AG04450 (cell line): ENCODE measurements at regions of chr9 and their contacts with region 1.

Region 1: DNA sequence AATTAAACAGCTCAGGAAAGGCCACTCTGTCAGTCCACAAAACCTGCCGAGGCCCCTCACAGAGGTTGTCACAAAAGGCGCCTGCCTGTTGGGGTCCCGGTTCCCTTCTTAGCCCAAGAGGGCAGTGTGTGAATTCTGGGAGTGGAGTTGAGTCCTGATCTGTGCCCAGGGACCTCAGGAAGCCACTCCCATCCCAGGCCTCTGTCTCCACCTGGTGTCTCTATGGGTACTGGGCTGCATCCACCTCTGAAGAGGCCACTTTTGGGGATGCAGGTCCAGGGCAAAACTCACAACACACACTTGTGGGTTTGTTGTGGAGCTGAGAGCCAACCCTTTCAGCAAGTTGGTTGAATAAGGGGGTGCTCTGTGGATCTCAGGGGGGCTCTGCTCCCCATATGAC is 74.3 kb upstream of the STXBP1 start:
- DNase-seq: no peak
- H3K4me3 ChIP-seq: no peak overlapping the region
- H3K27ac ChIP-seq: peak overlapping the region; percentile 70
- H3K27me3 ChIP-seq: no peaks in the 10 kb centered on the region
- CTCF ChIP-seq: peak; percentile 43

Region 2: GRCh38 chr9:127525401-127526187 is 12.2 kb before region 1 on chr9:
- CTCF ChIA-PET with region 1: interaction called, 16 read pairs
- POLR2A ChIA-PET with region 1: interaction called, 7 read pairs
- DNase-seq: no peak
- H3K4me3 ChIP-seq: no peak overlapping the region
- H3K27ac ChIP-seq: peak overlapping the region; percentile 21
- H3K27me3 ChIP-seq: no peaks in the 10 kb centered on the region
- CTCF ChIP-seq: peak; percentile 67

Region 3: GRCh38 chr9:127554966-127555767 is 17.4 kb after region 1 on chr9:
- CTCF ChIA-PET with region 1: interaction called, 4 read pairs
- POLR2A ChIA-PET with region 1: interaction called, 10 read pairs
- DNase-seq: no peak
- H3K4me3 ChIP-seq: no peak overlapping the region
- H3K27ac ChIP-seq: peak overlapping the region; percentile 89
- H3K27me3 ChIP-seq: no peaks in the 10 kb centered on the region
- CTCF ChIP-seq: no peak

Region 4: DNA sequence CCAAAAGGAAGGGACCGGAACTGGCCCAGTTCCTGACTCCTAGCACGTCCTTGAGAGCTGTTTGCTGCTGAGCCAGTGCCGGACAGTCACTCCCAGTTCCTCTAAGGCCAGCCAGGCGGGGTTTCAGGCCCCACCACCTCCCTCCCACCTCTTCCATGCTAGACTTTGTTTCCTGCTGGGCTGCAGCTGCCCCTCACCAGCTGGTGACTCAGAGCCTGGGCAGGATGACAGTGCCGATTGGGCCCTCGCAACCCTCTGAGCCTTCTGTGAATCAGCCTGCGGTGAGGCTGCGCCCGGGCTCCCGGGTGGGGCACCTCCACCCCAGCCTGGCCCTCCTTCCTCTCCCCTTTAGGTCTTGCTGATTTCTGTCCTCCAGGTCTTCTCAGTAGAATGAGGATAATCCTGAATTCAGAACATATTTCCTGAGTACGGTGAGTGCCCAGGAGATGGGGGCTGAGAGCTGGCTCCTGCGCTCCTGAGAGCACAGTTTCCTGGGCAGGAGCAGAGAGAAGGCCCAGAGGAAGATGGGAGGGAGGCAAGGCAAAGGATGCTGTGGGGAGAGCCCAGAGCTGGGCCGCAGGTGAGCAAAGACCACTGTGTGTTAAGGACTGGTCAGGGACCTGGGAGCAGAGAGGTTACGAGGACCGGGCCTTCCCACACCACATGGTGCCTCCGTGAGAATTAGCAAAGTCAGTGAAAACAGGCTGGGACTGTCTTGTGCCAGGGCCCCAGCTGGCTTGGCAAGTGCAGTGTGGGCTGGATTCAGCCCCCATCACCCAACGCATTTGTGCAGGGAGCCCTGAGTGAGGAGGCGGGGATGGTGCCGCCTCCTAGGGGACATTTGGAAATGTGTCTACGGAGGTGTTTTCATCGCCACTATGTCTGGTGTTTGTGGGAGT is 41.4 kb after region 1 on chr9:
- CTCF ChIA-PET with region 1: no interaction called
- POLR2A ChIA-PET with region 1: interaction called, 10 read pairs
- DNase-seq: peak; percentile 89
- H3K4me3 ChIP-seq: peak overlapping the region; percentile 60
- H3K27ac ChIP-seq: peak overlapping the region; percentile 98
- H3K27me3 ChIP-seq: no peaks in the 10 kb centered on the region
- CTCF ChIP-seq: peak; percentile 37

Region 5: DNA sequence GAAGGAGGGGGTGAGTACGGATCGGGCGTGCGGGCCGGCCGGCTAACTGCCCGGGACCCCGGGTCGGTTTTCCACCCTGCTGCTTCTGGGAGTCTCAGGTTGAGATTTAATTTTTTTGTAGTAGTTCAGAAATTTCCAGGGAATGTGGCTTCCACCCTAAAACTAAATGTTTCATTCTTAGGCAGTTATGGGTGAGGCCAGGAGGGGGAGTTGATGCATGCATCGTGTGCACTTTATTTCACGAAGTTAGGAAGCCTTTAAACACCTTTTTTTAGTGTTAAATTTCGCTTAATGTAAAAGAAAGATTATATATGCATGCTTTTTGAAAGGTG is 248.9 kb after region 1 on chr9:
- CTCF ChIA-PET with region 1: no interaction called
- POLR2A ChIA-PET with region 1: no interaction called
- DNase-seq: no peak
- H3K4me3 ChIP-seq: peak overlapping the region; percentile 89
- H3K27ac ChIP-seq: peak overlapping the region; percentile 31
- H3K27me3 ChIP-seq: no peaks in the 10 kb centered on the region
- CTCF ChIP-seq: peak; percentile 63

Region 6: DNA sequence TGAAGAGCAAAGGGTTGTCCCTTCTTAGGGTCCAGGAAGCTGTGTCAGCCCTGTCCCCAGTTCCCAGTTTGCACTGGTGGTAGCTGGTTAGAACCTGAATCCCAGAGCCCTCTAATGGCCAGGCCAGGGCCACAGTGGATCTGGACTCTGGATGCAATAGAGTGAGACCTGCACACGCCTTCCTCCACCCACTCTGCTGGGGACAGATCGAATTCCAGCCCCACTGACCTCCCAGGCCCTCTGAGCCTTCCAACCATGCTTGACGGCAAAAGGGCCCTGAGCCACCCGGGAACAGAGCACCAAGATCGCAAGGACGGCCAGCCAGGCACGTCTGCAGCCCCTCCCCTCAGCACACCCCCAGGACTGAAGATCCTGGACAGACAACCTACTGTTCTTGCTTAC is 505.7 kb after region 1 on chr9:
- CTCF ChIA-PET with region 1: no interaction called
- POLR2A ChIA-PET with region 1: no interaction called
- DNase-seq: no peak
- H3K4me3 ChIP-seq: no peak overlapping the region
- H3K27ac ChIP-seq: no peak overlapping the region
- H3K27me3 ChIP-seq: peaks cover 5% of the 10 kb centered on the region
- CTCF ChIP-seq: no peak